Calu3 (cell line): ENCODE measurements at regions of chr19 and their contacts with region 1.

Region 1: GRCh38 chr19:51777570-51778462 is 16.8 kb downstream of the FPR2 start:
- DNase-seq: peak; percentile 74
- H3K4me3 Mint-ChIP-seq: no peak overlapping the region
- H3K27ac Mint-ChIP-seq: no peak overlapping the region
- H3K4me1 Mint-ChIP-seq: no peaks in the 10 kb centered on the region
- H3K27me3 Mint-ChIP-seq: peaks cover 35% of the 10 kb centered on the region
- CTCF ChIP-seq: no peak

Region 2: DNA sequence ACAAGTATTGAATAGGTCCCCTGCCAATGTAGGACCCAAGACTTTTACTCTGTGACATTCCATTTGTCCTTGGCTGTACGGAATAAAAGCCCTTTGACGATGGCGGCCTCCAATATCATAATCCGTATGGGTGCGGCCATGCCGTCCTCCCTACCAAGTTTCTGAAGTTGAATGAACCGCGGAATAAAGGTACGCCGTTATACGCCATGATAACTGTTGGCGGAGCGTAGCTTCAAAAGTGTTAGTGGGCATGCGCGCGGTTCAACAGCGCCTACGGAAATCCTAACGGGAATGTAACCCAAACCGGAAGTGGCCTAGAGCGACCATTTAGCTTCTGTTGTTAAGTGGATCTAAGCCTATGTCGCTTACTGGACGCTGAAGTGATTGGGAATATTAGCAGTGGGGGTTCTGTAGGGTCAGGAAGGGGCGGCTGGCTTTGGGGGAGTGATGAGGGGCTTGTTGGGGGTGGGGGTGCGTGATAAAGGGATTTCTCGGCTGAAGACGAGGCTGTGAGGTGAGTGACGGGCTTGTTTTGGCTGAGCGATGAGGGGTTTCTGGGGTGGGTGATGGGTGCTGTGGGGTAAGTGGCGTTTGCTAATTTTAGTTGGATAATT is 206.7 kb before region 1 on chr19 and contains the start of gene ZNF175:
- CTCF ChIA-PET with region 1: no interaction called
- intact Hi-C with region 1: no loop called
- DNase-seq: peak; percentile 93
- H3K4me3 Mint-ChIP-seq: peak within 1 kb of the TSS; percentile 90
- H3K27ac Mint-ChIP-seq: peak within 1 kb of the TSS; percentile 89
- H3K4me1 Mint-ChIP-seq: peaks cover 11% of the 10 kb centered on the region
- H3K27me3 Mint-ChIP-seq: peaks cover 11% of the 10 kb centered on the region
- CTCF ChIP-seq: no peak
- total RNA-seq, gene ZNF175: 10.2 and 16.1 TPM in 2 replicates

Region 3: GRCh38 chr19:51712460-51713083 is 65.2 kb before region 1 on chr19:
- CTCF ChIA-PET with region 1: interaction called, 4 read pairs
- intact Hi-C with region 1: loop called (anchors 1 kb)
- DNase-seq: peak; percentile 48
- H3K4me3 Mint-ChIP-seq: no peak overlapping the region
- H3K27ac Mint-ChIP-seq: no peak overlapping the region
- H3K4me1 Mint-ChIP-seq: no peaks in the 10 kb centered on the region
- H3K27me3 Mint-ChIP-seq: peaks cover 41% of the 10 kb centered on the region
- CTCF ChIP-seq: peak; percentile 66

Region 4: GRCh38 chr19:51735759-51736449 is 41.9 kb before region 1 on chr19:
- CTCF ChIA-PET with region 1: no interaction called
- intact Hi-C with region 1: no loop called
- DNase-seq: no peak
- H3K4me3 Mint-ChIP-seq: no peak overlapping the region
- H3K27ac Mint-ChIP-seq: no peak overlapping the region
- H3K4me1 Mint-ChIP-seq: no peaks in the 10 kb centered on the region
- H3K27me3 Mint-ChIP-seq: peaks cover 32% of the 10 kb centered on the region
- CTCF ChIP-seq: no peak

Region 5: GRCh38 chr19:51807111-51807701 is 29.4 kb after region 1 on chr19:
- CTCF ChIA-PET with region 1: no interaction called
- intact Hi-C with region 1: no loop called
- DNase-seq: no peak
- H3K4me3 Mint-ChIP-seq: no peak overlapping the region
- H3K27ac Mint-ChIP-seq: no peak overlapping the region
- H3K4me1 Mint-ChIP-seq: no peaks in the 10 kb centered on the region
- H3K27me3 Mint-ChIP-seq: no peaks in the 10 kb centered on the region
- CTCF ChIP-seq: no peak